AG04449 (cell line): ENCODE measurements at regions of chr12 and their contacts with region 1.

Region 1: GRCh38 chr12:55940065-55940732 is 9.2 kb downstream of the DGKA start:
- DNase-seq: no peak
- H3K4me3 ChIP-seq: no peak overlapping the region
- CTCF ChIP-seq: peak; percentile 93

Region 2: DNA sequence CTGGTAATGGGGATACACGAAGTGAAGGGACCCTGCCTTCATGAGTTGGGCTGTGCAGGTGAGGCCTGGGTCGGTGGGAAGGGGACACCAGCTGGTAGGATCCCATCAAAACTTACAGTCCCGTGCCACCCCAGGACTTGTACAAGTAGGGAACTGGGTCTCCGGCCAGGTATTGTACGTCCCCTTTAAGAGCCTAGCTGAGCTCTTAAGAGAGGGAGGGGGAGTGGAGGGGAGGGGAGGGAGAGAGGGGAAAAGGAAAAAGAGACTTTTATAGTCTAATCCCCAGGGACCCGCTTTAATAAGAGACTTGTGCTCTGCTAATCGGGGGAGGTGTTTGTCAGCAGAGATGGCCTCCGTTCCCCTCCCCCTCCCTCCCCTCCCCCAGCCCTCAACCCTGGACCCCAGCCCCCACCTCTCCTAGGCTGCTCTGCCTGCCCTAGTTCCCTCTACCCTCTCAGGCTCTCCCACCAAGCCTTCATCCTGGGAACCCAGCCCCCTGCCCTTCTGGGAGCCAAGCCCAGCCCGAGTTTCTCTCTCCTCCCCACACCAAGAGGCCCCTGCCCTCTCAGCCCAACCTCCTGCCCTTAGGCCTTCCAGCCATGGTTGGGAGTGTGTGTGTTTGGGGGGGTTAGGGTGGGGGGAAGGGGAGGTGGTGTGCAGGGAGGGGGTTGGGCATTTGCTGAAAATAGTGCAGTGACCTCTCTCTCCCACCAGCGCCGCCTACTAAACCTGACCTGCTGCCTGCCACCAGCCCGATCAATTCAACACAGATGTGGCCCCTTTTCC is 194.6 kb before region 1 on chr12:
- CTCF ChIA-PET with region 1: interaction called, 193 read pairs
- POLR2A ChIA-PET with region 1: no interaction called
- DNase-seq: no peak
- H3K4me3 ChIP-seq: peak overlapping the region; percentile 43
- CTCF ChIP-seq: no peak

Region 3: DNA sequence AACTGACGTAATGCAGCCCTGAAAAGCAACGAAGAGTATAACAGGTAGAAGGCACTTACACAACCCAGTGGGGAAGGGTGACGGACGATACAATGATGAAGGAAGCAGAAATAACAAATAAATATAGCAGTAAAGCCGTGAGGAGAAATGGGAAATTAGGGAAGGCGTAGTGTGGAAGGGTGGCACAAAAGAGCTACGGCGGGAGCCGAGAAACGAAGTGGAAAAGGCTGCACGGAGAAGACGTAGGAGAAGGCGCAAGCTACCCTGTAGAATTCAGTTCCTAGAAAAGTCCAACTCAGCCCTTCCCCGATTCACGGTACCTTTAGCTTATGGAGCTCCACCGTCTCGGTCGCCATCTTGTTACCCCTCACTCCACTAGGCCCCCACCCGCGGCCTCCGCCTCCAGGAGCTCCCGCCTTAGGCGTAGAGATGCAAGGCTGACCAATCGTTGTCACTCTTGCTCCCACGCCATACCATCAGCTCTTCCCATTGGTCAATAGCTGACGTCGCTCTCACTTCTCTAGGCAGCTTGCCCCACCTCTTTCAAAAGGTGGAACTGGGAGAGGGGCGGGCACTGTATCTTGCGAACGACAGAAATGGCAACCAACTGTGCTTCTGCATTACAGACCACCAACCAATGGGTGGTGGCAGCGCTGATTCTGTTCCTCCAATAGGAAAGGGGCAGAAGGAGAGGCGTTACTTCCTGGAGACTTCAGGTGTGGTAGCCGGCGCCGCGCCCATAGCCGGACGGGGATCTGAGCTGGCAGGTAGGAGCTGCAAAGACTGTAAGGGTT is 122.7 kb before region 1 on chr12 and contains the starts of genes ORMDL2 and SARNP:
- CTCF ChIA-PET with region 1: interaction called, 69 read pairs
- POLR2A ChIA-PET with region 1: interaction called, 7 read pairs
- DNase-seq: peak; percentile 99
- H3K4me3 ChIP-seq: peak within 1 kb of the TSS; percentile 92
- CTCF ChIP-seq: no peak

Region 4: DNA sequence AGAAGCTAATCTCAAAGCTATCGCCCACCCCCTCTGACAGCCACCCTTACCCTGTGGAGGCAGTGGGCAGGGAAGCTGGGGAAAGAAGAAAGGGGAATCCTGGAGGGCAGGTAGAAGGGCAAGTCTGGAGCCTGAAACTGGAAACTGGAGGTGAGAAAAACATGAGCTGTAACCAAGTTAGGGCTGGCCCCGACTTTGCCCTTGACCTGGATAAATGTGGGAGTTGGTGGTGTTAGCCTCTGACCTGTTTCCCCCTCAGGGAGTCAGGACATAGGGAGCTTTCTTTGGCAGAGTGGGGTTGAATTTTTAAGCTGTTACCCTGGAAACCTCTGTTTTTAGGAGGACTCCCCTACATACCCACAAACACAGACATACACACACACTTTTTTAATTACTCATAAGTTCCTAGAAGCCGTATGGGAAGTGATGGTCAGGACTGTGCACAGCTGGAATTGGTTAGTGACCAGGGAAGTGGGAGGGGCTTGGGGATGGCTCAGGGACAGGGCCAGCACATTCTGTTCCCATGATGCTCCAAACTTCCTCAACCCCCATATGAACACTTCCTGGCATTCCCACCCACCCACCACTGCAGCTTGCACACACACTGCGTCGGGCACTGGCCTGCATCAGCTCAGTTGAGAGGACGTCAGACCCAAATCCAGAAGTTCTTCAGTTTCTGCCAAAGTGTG is 92.5 kb before region 1 on chr12:
- CTCF ChIA-PET with region 1: interaction called, 10 read pairs
- POLR2A ChIA-PET with region 1: no interaction called
- DNase-seq: peak; percentile 98
- H3K4me3 ChIP-seq: peak overlapping the region; percentile 47
- CTCF ChIP-seq: no peak

Region 5: DNA sequence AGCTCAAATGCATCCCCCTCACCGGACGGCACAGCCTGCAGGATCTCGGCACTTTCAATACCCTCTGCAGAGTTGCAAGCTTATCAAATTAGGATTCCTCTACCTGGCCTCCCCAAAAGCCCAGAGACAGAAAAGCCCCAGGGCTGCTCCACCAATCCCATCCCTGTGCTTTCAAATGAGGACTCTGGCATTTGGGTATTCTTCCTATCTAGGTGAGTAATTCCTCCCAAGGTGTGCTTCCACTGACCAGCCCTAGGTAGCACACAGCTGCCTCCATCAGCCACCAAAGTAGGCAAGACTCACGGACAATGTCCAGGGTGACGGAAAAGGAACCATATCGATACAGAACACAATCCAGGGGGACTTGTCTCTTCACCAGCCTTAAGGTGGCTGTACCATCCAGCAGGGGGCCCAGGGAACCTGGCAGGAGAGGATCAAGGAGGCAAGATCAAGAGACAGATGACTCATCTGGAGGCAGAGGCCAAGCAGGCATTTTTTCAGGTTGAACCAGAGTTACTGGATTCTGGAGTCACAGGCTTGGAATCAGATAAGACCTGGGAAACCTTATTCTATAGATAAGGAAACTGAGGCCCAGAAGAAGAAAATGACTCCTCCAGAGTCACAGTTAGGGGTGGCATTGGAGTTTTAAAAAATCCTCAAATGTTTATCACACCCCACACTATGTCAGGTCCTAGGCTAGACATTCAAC is 15.8 kb after region 1 on chr12:
- CTCF ChIA-PET with region 1: interaction called, 206 read pairs
- POLR2A ChIA-PET with region 1: no interaction called
- DNase-seq: no peak
- H3K4me3 ChIP-seq: no peak overlapping the region
- CTCF ChIP-seq: peak; percentile 35

Region 6: DNA sequence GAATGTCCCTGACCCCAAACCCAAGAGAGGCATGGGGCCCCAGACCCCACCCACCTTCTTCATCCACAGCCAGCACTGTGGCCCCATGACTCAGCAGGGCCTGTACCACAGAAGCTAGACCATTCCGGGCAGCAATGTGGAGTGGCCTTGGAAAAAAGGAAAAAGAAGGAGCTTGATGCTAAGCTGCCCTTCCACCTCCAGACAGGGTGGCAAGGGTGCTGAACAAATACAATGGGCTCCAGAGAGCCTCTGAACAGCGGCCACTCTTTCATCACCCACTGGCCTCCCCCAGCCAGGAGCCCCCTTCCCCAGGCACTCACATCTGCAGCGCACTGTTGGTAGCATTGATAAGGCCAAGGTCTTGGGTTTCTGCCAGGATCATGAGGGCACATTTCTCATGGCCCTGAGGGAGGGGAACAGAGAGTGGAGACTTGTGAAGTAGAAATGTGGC is 303.6 kb after region 1 on chr12:
- CTCF ChIA-PET with region 1: no interaction called
- POLR2A ChIA-PET with region 1: no interaction called
- DNase-seq: no peak
- H3K4me3 ChIP-seq: no peak overlapping the region
- CTCF ChIP-seq: no peak